IMR-90 (cell line): ENCODE measurements at regions of chr4 and their contacts with region 1.

Region 1: GRCh38 chr4:121964958-121965357 is 13.1 kb upstream of the TRPC3 start:
- DNase-seq: no peak
- ATAC-seq: no peak
- H3K4me3 ChIP-seq: no peak overlapping the region
- H3K27ac ChIP-seq: no peak overlapping the region
- H3K4me1 ChIP-seq: no peaks in the 10 kb centered on the region
- H3K27me3 ChIP-seq: no peaks in the 10 kb centered on the region
- CTCF ChIP-seq: no peak
- POLR2A ChIP-seq: no peak
- RAD21 ChIP-seq: no peak

Region 2: DNA sequence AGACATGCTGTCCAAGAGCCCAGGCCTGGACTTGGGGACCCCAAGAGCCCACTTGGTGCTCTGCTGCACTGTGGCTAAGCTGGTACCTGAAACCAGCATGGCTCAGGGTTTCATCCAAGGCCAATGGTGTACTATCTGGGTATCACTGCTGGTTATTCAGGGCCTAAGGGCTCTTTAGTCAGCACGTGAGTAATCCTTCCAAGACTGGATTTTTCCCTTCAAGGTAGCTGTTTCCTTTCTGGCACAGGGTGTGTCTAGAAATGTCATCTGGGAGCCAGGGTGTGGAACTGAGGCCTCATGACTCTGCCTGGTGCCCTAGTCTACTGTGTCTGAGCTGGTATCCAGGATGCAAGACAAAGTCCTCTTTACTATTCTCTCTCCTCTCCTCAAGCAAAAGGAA is 485.2 kb before region 1 on chr4:
- CTCF ChIA-PET with region 1: no interaction called
- POLR2A ChIA-PET with region 1: no interaction called
- dilution Hi-C with region 1: no loop called
- in situ Hi-C with region 1: no loop called
- intact Hi-C with region 1: no loop called
- DNase-seq: no peak
- ATAC-seq: no peak
- H3K4me3 ChIP-seq: no peak overlapping the region
- H3K27ac ChIP-seq: no peak overlapping the region
- H3K4me1 ChIP-seq: no peaks in the 10 kb centered on the region
- H3K27me3 ChIP-seq: peaks cover 2% of the 10 kb centered on the region; the same call in 1 of the 2 replicates
- CTCF ChIP-seq: no peak
- POLR2A ChIP-seq: no peak
- RAD21 ChIP-seq: no peak

Region 3: GRCh38 chr4:121913667-121914066 is 51.3 kb before region 1 on chr4:
- CTCF ChIA-PET with region 1: no interaction called
- POLR2A ChIA-PET with region 1: no interaction called
- dilution Hi-C with region 1: no loop called
- in situ Hi-C with region 1: no loop called
- intact Hi-C with region 1: no loop called
- DNase-seq: peak; percentile 24
- ATAC-seq: peak; percentile 42
- H3K4me3 ChIP-seq: no peak overlapping the region
- H3K27ac ChIP-seq: no peak overlapping the region
- H3K4me1 ChIP-seq: no peaks in the 10 kb centered on the region
- H3K27me3 ChIP-seq: no peaks in the 10 kb centered on the region
- CTCF ChIP-seq: no peak
- POLR2A ChIP-seq: no peak
- RAD21 ChIP-seq: no peak

Region 4: DNA sequence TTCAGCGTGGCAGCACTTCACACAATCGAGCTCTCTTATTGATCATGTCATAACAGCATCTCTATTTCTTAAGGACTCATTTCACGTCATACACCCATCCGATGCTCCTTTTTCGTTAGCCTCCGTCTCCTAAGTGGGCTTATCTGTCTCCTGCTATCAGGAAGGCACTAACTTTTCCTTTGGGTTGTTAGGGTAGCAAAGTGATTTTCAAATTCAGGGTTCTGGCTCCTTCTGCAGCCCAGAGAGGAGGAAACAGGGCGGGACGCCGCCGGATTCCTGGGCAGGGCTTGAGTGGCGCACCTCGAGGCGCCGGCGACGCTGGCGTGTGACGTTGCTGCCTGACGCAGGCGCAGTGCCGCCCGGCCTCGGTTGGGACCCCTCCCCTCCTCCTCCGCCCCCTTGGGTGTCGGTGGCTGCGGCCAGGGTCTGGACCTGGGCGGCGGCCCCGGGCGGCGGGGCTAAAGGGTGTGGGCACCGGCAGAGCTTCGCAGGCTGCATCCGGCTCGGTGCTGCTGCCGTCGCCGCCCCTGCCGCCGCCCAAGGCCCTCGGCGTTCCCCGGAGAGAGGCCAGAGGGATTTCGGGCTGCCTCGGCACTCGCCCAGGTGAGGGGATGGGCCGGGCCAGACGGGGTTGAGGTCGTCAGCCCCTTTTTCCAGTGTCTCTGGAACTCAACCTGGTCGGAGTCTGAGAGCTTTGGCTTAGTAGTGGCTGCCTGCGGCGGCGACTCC is 187.2 kb after region 1 on chr4 and contains the start of gene BLTP1:
- CTCF ChIA-PET with region 1: no interaction called
- POLR2A ChIA-PET with region 1: interaction called, 11 read pairs
- dilution Hi-C with region 1: no loop called
- in situ Hi-C with region 1: no loop called
- intact Hi-C with region 1: no loop called
- DNase-seq: peak; percentile 75
- ATAC-seq: peak; percentile 99
- H3K4me3 ChIP-seq: peak within 1 kb of the TSS; percentile 91
- H3K27ac ChIP-seq: peak within 1 kb of the TSS; percentile 81
- H3K4me1 ChIP-seq: no peaks in the 10 kb centered on the region
- H3K27me3 ChIP-seq: no peaks in the 10 kb centered on the region
- CTCF ChIP-seq: no peak
- POLR2A ChIP-seq: no peak
- RAD21 ChIP-seq: 0 out of 2 replicates have a peak, but pooled peaks have one; percentile 9
- total RNA-seq, gene BLTP1: 92.7 and 111 TPM in 2 replicates